Panc1 (cell line): ENCODE measurements at regions of chr14 and their contacts with region 1.

Region 1: GRCh38 chr14:53192052-53192760 is 39.1 kb upstream of the DDHD1 start:
- DNase-seq: no peak
- ATAC-seq: no peak
- H3K4me3 ChIP-seq: no peak overlapping the region
- H3K27ac ChIP-seq: no peak overlapping the region
- H3K4me1 ChIP-seq: no peaks in the 10 kb centered on the region
- H3K27me3 ChIP-seq: no peaks in the 10 kb centered on the region
- CTCF ChIP-seq: no peak

Region 2: DNA sequence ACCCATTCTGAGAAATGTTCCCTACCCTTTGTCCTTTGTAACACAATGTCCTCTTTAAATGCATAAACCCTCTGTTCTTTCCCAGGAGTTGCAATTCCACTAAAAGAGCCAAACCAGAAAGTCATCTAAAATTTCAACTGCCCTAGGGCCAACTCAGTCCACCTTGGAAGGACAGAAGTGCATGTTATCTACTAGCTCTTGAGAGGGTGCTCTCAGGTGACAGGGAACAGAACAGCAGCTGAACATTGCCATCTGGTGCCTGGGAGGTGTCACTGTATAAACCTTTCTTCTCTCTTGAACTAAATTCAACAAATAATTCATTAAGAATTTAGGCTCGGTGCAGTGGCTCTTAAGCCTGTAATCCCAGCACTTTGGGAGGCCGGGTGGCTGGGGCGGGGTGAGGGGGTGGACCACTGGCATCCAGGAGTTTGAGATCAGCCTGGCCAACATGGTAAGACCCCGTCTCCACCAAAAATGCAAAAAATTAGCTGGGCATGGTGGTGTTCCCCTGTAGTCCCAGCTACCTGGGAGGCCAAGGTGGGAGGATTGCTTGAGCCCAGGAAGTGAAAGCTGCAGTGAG is 231.1 kb before region 1 on chr14:
- CTCF ChIA-PET with region 1: interaction called, 13 read pairs
- POLR2A ChIA-PET with region 1: no interaction called
- in situ Hi-C with region 1: no loop called
- intact Hi-C with region 1: no loop called
- DNase-seq: no peak
- ATAC-seq: peak; percentile 93
- H3K4me3 ChIP-seq: no peak overlapping the region
- H3K27ac ChIP-seq: no peak overlapping the region
- H3K4me1 ChIP-seq: no peaks in the 10 kb centered on the region
- H3K27me3 ChIP-seq: no peaks in the 10 kb centered on the region
- CTCF ChIP-seq: peak; percentile 73

Region 3: DNA sequence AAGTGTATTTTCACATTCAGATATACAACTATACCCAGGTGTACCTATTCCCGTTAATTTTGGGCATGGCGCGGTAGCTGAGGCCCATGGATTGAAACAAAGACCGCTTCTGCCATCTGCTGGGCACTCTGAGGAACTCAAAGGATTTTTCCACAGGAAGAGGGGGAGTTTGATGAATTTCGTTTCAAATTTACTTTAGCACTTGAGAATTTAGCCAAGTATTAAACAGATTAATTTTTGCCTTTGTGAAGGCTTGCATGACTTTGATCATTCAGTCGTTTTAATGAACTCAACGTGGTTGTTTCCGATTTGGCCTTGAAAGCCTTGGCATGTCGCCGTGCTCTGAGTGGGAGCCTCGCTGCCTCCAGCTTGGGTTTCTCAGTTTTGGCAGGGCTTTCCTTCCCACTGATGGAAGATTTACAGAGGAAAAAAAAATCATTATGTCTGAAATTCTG is 114.1 kb after region 1 on chr14:
- CTCF ChIA-PET with region 1: no interaction called
- POLR2A ChIA-PET with region 1: no interaction called
- in situ Hi-C with region 1: no loop called
- intact Hi-C with region 1: no loop called
- DNase-seq: peak; percentile 5
- ATAC-seq: no peak; the same call in 1 of the 2 replicates
- H3K4me3 ChIP-seq: peak overlapping the region; percentile 36 to 46
- H3K27ac ChIP-seq: no peak overlapping the region
- H3K4me1 ChIP-seq: no peaks in the 10 kb centered on the region
- H3K27me3 ChIP-seq: no peaks in the 10 kb centered on the region
- CTCF ChIP-seq: peak; percentile 79